ENCODE measurements at regions of chr9 and their contacts with region 1.

Region 1: DNA sequence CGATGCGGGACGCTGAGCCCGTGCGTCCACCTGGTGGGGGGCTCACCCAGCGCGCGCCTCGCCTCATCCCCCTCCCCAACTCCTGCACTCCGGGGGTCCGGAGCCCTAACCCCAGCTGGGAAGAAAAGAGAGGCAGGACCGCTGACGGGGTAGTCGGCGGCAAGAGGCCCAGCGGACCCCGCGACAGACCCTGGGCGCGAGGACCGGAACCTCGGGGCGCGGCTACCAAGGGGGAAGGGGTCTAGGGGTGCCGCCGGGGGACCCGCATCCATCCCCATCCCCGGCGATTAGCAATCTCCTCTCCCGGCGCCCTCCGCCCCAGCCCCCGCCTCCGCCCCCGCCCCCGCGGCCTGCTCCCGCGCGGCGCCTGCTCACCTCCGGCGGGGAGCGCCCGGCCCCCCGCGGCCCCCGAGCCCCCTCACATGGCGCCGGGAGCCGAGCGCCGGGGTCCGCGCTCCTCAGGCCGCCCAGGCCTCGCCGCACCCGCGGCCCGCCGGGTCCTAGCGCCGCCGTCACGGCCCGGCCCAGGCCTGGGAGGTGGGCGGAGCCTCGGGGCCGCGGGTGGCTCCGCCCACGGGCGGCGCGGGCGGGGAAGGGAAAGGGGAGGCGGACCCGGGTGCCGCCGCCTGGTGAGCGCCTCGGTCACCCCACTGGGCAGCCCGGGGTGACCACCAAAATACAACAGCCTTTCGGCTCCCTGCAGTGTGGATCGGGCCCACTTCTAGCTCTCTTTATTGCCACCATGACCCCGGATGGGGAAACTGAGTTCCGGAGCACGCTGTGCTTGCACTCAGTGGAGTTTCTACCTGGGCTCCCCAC is at the start of gene ST6GALNAC6:
- DNase-seq: peak; percentile 85
- ATAC-seq: peak; percentile 69
- H3K4me3 Mint-ChIP-seq: peak within 1 kb of the TSS; percentile 82
- H3K27ac Mint-ChIP-seq: peak within 1 kb of the TSS; percentile 87
- H3K4me1 Mint-ChIP-seq: peaks cover 35% of the 10 kb centered on the region
- H3K27me3 Mint-ChIP-seq: no peaks in the 10 kb centered on the region
- total RNA-seq, gene ST6GALNAC6: 46.3 to 63.3 TPM

Region 2: GRCh38 chr9:127253446-127253845 is 645.9 kb before region 1 on chr9:
- CTCF ChIA-PET with region 1: no interaction called
- POLR2A ChIA-PET with region 1: no interaction called
- intact Hi-C with region 1: no loop called
- DNase-seq: no peak
- ATAC-seq: no peak
- H3K4me3 Mint-ChIP-seq: no peak overlapping the region
- H3K27ac Mint-ChIP-seq: no peak overlapping the region
- H3K4me1 Mint-ChIP-seq: no peaks in the 10 kb centered on the region
- H3K27me3 Mint-ChIP-seq: peaks cover 14% of the 10 kb centered on the region

Region 3: DNA sequence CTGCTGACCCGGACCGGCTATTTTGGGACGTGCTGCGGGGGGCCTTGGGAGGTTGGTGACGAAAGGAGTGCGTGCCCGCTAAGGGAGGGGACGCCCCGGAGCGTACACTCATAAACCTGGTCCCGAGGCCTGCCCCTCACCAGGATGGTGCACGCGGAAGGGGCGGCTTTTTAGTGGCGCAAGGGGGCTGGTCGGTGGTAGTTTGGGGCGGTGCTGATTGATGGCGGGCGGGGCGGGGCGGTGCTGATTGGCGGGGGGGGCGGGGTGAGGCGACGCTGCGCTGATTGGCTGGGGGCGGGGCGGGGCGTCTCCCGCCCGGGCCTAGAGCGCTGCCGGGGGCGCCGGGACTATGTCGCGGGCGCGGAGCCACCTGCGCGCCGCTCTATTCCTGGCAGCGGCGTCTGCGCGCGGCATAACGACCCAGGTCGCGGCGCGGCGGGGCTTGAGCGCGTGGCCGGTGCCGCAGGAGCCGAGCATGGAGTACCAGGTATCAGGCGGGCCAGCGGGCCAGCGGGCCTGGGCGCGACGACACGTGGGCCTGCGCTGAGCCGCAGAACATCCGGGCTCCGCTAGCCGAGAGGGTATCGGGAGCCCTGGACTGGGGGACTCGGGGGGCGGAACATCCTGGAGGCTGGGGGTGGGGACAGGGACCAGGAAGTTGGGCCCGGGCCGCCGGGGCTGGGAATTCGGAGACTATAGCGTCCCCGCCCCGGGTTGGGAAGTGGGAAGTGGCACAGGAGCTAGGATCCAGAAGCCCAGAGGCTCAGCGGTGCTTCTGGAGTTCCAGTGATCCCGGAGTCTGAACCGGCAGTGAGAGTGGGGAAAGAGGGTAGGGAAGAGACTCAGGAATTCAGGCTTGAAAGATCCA is 96.5 kb before region 1 on chr9 and contains the start of gene FPGS:
- CTCF ChIA-PET with region 1: no interaction called
- POLR2A ChIA-PET with region 1: no interaction called
- intact Hi-C with region 1: loop called in 1 of 2 experiments (anchors 1 kb)
- DNase-seq: peak; percentile 93
- ATAC-seq: peak; percentile 86
- H3K4me3 Mint-ChIP-seq: peak within 1 kb of the TSS; percentile 98
- H3K27ac Mint-ChIP-seq: peak within 1 kb of the TSS; percentile 95
- H3K4me1 Mint-ChIP-seq: peaks cover 26% of the 10 kb centered on the region
- H3K27me3 Mint-ChIP-seq: no peaks in the 10 kb centered on the region
- total RNA-seq, gene FPGS: 71.9 to 80.4 TPM

Region 4: DNA sequence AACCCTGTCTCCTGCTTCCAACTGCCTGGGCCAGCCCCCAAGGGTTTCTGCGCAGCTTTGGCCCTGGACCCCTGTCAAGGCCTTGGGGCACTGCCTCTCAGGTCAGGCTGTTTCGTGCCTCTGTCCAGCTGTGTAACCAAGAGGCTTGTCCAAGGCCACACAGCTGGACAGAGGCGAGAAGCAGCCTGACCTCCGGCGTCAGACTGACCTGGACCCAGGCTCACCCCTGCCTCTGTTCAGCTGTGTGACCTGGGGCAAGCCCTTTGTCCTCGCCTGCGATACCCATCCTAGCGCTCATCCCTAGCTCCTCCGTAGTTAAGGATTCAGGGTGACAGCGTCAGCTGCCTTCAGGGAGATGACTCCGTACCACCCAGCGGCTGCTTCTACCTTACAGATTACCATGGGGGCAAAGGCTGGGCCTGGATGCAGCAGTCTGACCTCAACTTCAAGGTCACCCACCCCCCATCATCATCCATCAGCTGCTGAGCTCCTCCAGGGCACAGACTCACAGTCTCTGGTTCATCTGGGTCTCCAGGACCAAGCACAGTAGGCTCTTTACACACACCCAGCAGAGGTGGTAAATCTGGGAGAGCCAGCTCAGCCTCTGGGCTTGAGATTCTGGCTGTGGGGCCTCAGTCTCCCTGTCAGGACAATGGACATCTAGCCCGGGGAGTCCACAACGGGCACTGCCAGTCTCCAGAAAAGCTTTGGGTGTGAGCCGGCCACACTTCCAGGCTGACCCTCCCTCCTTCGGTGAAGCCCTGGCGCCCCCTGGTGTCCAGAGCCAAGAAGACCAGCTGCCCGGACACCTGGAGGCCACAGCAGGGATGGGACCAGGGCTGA is 29.8 kb before region 1 on chr9:
- CTCF ChIA-PET with region 1: interaction called, 19 read pairs
- POLR2A ChIA-PET with region 1: interaction called, 3 read pairs
- intact Hi-C with region 1: no loop called
- DNase-seq: peak; percentile 91
- ATAC-seq: peak; percentile 75
- H3K4me3 Mint-ChIP-seq: no peak overlapping the region
- H3K27ac Mint-ChIP-seq: no peak overlapping the region
- H3K4me1 Mint-ChIP-seq: peaks cover 16% of the 10 kb centered on the region
- H3K27me3 Mint-ChIP-seq: no peaks in the 10 kb centered on the region

Region 5: DNA sequence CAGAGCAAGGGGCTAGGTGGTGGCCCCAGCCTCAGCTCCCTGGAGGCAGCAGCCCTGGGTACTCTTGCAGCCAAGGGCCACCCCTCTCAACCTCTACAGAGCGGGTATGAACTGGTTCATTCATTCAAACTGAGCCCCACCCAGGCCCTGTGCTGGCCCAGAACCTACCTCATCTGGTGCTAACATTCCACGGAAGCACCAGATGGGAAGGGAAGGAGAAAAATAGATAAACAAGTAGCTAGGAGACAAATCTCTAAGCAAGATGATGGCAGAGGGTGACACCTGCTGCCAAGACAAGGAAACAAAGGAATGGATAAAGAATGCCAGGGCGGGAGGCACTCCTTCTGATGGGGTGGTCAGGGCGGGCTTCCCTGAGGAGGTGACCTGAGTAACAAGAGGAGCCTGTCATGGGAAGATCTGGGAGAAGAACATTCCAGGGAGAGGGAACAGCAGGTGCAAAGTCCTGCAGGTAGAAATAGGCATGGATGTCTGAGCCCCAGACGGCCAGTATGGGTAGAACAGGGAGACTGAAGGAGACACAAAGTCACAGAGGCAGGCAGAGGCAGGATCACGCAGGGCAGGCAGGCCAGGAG is 11.4 kb after region 1 on chr9:
- CTCF ChIA-PET with region 1: interaction called, 3 read pairs
- POLR2A ChIA-PET with region 1: interaction called, 7 read pairs
- intact Hi-C with region 1: loop called in 1 of 2 experiments (anchors 1 kb)
- DNase-seq: no peak
- ATAC-seq: no peak
- H3K4me3 Mint-ChIP-seq: peak overlapping the region; percentile 1
- H3K27ac Mint-ChIP-seq: peak overlapping the region; percentile 86
- H3K4me1 Mint-ChIP-seq: peaks cover 39% of the 10 kb centered on the region
- H3K27me3 Mint-ChIP-seq: no peaks in the 10 kb centered on the region